Caco-2 (cell line): ENCODE measurements at regions of chr6 and their contacts with region 1.

Region 1: GRCh38 chr6:64505312-64505711 is 869.7 kb downstream of the PHF3 start:
- DNase-seq: peak; percentile 36 to 52
- H3K4me3 ChIP-seq: no peak overlapping the region
- H3K4me3 Mint-ChIP-seq: no peak overlapping the region
- H3K27ac Mint-ChIP-seq: no peak overlapping the region
- H3K4me1 ChIP-seq: 0 out of 2 replicates have a peak, but pooled peaks cover 4% of the 10 kb centered on the region
- H3K4me1 Mint-ChIP-seq: no peaks in the 10 kb centered on the region
- H3K27me3 ChIP-seq: no peaks in the 10 kb centered on the region
- H3K27me3 Mint-ChIP-seq: no peaks in the 10 kb centered on the region
- CTCF ChIP-seq: peak; percentile 52 to 55

Region 2: DNA sequence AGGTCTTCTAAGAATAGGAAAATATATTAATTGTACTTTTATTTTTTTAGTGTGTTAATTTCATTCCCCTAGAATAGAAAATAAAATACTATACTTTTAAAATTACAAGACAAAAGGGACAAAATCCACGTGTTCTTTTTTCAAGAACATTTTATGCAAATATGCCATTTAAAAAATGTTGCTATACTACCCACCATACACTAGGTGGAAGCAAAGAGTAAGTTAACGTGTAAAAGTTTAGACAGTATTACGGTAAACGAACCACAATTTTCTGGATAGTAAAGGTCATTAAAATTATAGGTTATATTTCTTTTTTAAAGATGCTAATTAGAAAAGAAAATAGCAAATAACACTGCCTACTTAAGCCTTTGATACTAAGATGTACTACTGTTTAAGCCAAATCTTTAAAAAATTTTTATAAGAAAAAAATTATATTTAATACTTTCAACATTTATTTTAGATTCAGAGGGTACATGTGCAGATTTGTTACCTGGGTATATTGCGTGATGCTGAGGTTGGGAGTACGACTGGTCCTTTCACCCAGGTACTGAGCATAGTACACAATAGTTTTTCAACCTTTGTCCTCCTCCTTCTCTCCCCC is 582.1 kb before region 1 on chr6:
- CTCF ChIA-PET with region 1: no interaction called
- POLR2A ChIA-PET with region 1: no interaction called
- intact Hi-C with region 1: loop called (anchors 10 kb)
- DNase-seq: peak in 1 of 2 experiments; percentile 6
- H3K4me3 ChIP-seq: no peak overlapping the region
- H3K4me3 Mint-ChIP-seq: no peak overlapping the region
- H3K27ac Mint-ChIP-seq: no peak overlapping the region
- H3K4me1 ChIP-seq: no peaks in the 10 kb centered on the region
- H3K4me1 Mint-ChIP-seq: no peaks in the 10 kb centered on the region
- H3K27me3 ChIP-seq: no peaks in the 10 kb centered on the region
- H3K27me3 Mint-ChIP-seq: peaks cover 8% of the 10 kb centered on the region
- CTCF ChIP-seq: peak in 1 of 2 experiments; percentile 50

Region 3: GRCh38 chr6:64280569-64280968 is 224.7 kb before region 1 on chr6:
- CTCF ChIA-PET with region 1: no interaction called
- POLR2A ChIA-PET with region 1: no interaction called
- intact Hi-C with region 1: loop called (anchors 1 kb)
- DNase-seq: peak in 1 of 2 experiments; percentile 45
- H3K4me3 ChIP-seq: no peak overlapping the region
- H3K4me3 Mint-ChIP-seq: no peak overlapping the region
- H3K27ac Mint-ChIP-seq: no peak overlapping the region
- H3K4me1 ChIP-seq: no peaks in the 10 kb centered on the region
- H3K4me1 Mint-ChIP-seq: peaks cover 7% of the 10 kb centered on the region
- H3K27me3 ChIP-seq: no peaks in the 10 kb centered on the region
- H3K27me3 Mint-ChIP-seq: no peaks in the 10 kb centered on the region
- CTCF ChIP-seq: peak; percentile 48 to 55